Cardiac septum (tissue), 1 donor: ENCODE measurements at regions of chr17 and their contacts with region 1.

Region 1: GRCh38 chr17:10105513-10106001 is 92.8 kb downstream of the GAS7 start:
- DNase-seq: peak; percentile 77

Region 2: GRCh38 chr17:10033959-10034358 is 71.6 kb before region 1 on chr17:
- intact Hi-C with region 1: loop called (anchors 10 kb)
- DNase-seq: no peak

Region 3: DNA sequence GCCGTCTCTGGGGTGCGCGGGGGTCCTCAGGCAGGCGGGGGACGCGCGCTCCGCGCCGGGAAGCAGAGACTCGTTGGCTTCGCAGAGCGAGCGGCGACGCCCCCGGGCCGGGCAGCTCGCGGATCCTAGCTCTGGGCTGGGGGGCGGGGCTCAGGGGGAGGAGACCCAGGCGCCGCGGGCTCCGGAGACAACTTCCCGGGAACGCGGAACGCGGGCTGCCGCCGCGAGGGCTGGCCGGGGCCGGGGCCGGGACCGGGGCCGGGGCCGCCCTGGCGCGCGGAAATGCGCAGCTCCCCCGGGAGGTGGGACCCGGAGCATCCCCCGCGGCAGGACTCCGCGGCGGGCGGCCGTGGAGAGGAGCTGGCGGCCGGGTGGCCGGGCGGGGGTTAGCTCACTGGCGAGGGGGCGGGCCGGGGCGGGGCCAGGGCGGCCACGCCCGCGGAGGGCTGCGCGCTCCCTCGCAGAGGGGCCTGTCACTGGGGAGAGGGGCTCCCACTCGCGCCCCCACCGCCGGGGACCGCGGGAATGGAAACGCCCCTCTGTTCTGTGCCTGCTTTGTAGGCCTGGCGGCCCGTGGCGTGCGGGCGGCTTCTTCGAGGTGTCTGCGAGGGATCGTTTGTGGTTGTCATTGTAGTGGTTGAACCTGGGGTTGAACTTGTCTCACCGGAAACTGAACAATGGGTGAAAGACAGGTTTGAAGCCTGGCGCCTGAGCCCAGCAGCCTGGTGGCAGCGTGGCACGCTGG is 93.1 kb after region 1 on chr17 and contains the start of gene GAS7:
- intact Hi-C with region 1: loop called (anchors 5 kb)
- DNase-seq: peak; percentile 81
- total RNA-seq, gene GAS7: 75.9 TPM